A549 (cell line): ENCODE measurements at regions of chr3 and their contacts with region 1.

Region 1: GRCh38 chr3:98329392-98330124 is 24.1 kb upstream of the OR5K4 start:
- DNase-seq: peak; percentile 11 to 55
- ATAC-seq: peak; percentile 90 to 93
- H3K4me3 ChIP-seq: no peak overlapping the region
- H3K27ac ChIP-seq: no peak overlapping the region
- H3K4me1 ChIP-seq: no peaks in the 10 kb centered on the region
- CTCF ChIP-seq: peak; percentile 84
- EP300 ChIP-seq: no peak
- POLR2A ChIP-seq: no peak
- RAD21 ChIP-seq: peak; percentile 75

Region 2: GRCh38 chr3:98039322-98040024 is 290.1 kb before region 1 on chr3:
- CTCF ChIA-PET with region 1: interaction called, 89 read pairs
- POLR2A ChIA-PET with region 1: no interaction called
- DNase-seq: peak; percentile 35 to 89
- ATAC-seq: peak; percentile 90 to 96
- H3K4me3 ChIP-seq: peak overlapping the region; percentile 19; the same call in 1 of the 3 replicates
- H3K27ac ChIP-seq: no peak overlapping the region
- H3K4me1 ChIP-seq: no peaks in the 10 kb centered on the region
- CTCF ChIP-seq: peak; percentile 97
- EP300 ChIP-seq: no peak
- POLR2A ChIP-seq: no peak
- RAD21 ChIP-seq: peak; percentile 78 to 88

Region 3: DNA sequence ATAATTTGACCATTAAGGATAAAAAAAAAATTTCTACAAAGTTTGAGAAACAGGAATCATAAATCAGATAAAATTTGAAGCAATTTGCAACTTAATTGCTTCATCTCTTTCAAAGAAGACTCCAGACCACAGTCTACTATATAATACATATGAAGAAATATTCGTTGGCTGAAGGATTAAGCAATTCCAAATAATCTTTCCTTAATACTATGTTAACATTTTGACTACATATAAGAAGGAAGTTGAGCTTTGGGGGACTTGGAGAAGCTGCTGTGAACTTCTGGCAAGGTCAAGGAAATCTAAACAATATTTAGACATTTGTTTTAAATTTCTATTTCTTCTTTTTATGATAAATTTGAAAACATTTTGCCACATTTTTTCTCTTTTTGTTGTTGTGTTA is 281.0 kb before region 1 on chr3:
- CTCF ChIA-PET with region 1: interaction called, 89 read pairs
- POLR2A ChIA-PET with region 1: interaction called, 3 read pairs
- DNase-seq: no peak
- ATAC-seq: no peak
- H3K4me3 ChIP-seq: no peak overlapping the region
- H3K27ac ChIP-seq: no peak overlapping the region
- H3K4me1 ChIP-seq: no peaks in the 10 kb centered on the region
- CTCF ChIP-seq: no peak
- EP300 ChIP-seq: no peak
- POLR2A ChIP-seq: no peak
- RAD21 ChIP-seq: no peak

Region 4: GRCh38 chr3:98343647-98344507 is 14.3 kb after region 1 on chr3:
- CTCF ChIA-PET with region 1: interaction called, 18 read pairs
- POLR2A ChIA-PET with region 1: no interaction called
- DNase-seq: peak; percentile 24 to 53
- ATAC-seq: peak; percentile 78 to 83; a peak in 5 of 6 replicates
- H3K4me3 ChIP-seq: no peak overlapping the region
- H3K27ac ChIP-seq: no peak overlapping the region
- H3K4me1 ChIP-seq: no peaks in the 10 kb centered on the region
- CTCF ChIP-seq: peak; percentile 51
- EP300 ChIP-seq: no peak
- POLR2A ChIP-seq: no peak
- RAD21 ChIP-seq: peak in 1 of 2 experiments; percentile 36; a peak in 2 of 5 replicates

Region 5: GRCh38 chr3:98406034-98406433 is 76.5 kb after region 1 on chr3:
- CTCF ChIA-PET with region 1: no interaction called
- POLR2A ChIA-PET with region 1: no interaction called
- DNase-seq: no peak
- ATAC-seq: no peak
- H3K4me3 ChIP-seq: no peak overlapping the region
- H3K27ac ChIP-seq: no peak overlapping the region
- H3K4me1 ChIP-seq: no peaks in the 10 kb centered on the region
- CTCF ChIP-seq: no peak
- EP300 ChIP-seq: no peak
- POLR2A ChIP-seq: no peak
- RAD21 ChIP-seq: no peak

Region 6: DNA sequence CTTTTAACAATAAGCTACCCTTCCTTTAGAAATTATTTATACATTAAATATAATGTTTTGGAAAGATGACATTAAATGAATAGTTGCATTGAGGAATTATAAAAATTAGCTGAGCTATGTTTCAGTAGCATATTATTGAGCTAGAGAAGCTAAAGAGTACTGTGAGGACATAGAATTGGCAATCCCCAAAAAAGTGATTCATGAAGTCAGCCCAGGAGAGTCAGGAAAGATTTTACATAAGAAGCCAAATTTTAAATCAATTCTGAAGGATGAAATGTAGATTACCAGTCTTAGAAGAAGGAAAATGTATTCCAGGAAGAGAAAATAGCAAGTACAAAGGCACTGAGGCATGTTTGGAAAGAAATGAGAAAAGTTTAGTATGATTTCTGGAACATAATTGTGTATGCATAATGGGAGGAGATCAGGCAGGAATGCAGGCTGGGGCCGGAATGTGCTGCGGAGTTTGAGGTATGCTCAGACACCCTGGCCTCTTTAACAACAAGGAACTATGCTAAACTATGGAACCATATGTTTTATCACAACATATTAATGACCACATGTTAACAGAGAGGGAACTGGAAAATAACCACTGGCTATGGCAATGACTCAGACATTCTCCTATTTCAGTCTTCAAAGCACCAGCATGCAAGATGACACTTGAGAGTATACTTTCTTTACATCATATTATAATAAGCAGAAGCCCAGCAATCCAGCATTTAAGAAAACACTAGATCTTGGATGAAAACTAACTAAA is 1205.6 kb after region 1 on chr3:
- CTCF ChIA-PET with region 1: no interaction called
- POLR2A ChIA-PET with region 1: no interaction called
- DNase-seq: no peak
- ATAC-seq: no peak
- H3K4me3 ChIP-seq: no peak overlapping the region
- H3K27ac ChIP-seq: no peak overlapping the region
- H3K4me1 ChIP-seq: no peaks in the 10 kb centered on the region
- CTCF ChIP-seq: no peak
- EP300 ChIP-seq: no peak
- POLR2A ChIP-seq: no peak
- RAD21 ChIP-seq: no peak